CD4-positive, alpha-beta memory T cell (primary cell): ENCODE measurements at regions of chr11 and their contacts with region 1.

Region 1: DNA sequence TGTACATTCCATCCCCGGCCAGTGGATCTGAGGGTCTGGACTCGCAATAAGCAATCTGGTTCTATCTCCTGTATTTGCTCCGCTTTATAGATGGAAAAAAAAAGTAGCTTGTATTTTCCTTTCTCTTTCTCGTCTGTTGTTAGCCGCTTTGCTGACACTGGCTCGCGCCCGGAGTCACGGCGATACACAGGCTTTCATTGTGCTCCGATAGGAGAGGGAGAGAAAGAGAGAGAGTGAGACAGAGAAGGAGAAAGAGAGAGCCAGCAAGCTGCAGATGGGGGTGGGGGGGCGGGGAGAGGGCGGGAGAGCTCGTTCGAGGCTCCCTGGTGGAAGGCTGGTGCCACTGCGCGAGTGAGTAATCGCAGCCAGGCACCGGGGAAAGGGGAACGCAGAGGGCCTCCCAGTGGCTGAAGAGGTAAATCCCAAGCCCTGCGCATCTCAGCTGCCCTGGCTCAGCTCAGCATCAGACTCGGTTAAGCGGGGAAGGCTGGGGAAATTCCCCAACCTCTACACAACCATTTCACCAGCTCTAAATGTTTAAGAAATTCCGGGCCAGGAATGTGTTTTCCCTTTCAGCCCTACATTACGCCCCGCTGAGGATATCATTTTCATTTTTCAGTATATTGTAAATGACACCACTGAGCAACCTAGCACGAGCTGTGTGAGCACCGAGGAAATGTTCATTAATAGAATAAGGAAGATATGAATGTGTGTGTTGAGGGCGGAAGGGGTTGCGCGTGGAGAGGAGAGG is at the start of gene MAML2:
- DNase-seq: peak; percentile 84 to 96 (median 89)
- H3K4me3 ChIP-seq: peak within 1 kb of the TSS; percentile 60 to 78
- H3K4me3 Mint-ChIP-seq: peak within 1 kb of the TSS; percentile 91 to 98 (median 94)
- H3K27ac ChIP-seq: peak within 1 kb of the TSS; percentile 75
- H3K27ac Mint-ChIP-seq: peak within 1 kb of the TSS; percentile 86 to 97 (median 96)
- H3K4me1 ChIP-seq: peaks cover 34% of the 10 kb centered on the region
- H3K4me1 Mint-ChIP-seq: peaks cover 23 to 46% (median 30%) of the 10 kb centered on the region in 4 donors
- H3K27me3 ChIP-seq: no peaks in the 10 kb centered on the region
- H3K27me3 Mint-ChIP-seq: no peaks in the 10 kb centered on the region
- total RNA-seq, gene MAML2: 37.5 to 38.3 TPM

Region 2: DNA sequence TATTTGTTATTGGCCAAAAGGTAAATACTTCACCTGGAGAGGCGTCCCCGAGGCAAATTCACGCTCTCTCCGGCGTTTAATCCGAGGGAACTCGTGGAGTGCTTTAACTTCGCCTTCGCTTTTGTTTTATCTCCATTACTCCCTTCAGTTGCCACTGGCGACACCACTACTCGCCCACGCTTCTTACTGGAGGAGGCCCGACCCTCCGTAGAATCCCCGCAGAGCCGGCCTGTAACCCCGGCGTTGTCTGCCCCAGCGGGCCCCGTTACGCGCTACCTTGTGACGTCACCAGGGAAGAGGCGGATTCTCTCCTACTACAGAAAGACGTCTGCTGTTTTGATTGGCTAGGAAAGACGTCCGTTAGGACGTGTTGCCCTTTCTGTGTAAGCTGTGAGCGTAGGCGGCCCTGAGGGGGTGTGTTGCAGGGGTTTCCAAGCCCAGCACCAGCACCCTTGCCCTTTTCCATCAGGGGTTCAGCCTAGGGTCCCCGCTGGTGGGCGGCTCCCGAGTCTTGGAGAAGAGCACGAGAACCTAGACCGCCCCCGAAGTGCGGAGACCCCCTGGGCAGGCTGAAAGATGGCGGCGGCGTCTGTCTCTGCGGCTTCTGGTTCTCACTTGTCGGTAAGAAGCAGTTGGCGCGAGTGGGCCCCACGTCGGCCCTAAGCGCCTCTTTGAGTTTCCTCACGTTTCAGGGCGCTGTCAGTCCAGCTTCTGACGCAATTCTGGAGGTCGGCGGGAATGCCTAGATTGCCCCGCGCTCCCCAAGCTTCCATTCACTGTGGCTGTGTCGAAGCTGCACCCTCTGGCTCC is 552.8 kb before region 1 on chr11 and contains the start of gene CEP57:
- CTCF ChIA-PET with region 1: interaction called, 12 read pairs
- POLR2A ChIA-PET with region 1: interaction called, 20 read pairs
- intact Hi-C with region 1: loop called (anchors 2 kb)
- DNase-seq: peak; percentile 95 to 99 (median 96)
- H3K4me3 ChIP-seq: peak within 1 kb of the TSS; percentile 68 to 98
- H3K4me3 Mint-ChIP-seq: peak within 1 kb of the TSS; percentile 97 to 100 (median 99)
- H3K27ac ChIP-seq: peak within 1 kb of the TSS; percentile 99
- H3K27ac Mint-ChIP-seq: peak within 1 kb of the TSS; percentile 100
- H3K4me1 ChIP-seq: peaks cover 47% of the 10 kb centered on the region
- H3K4me1 Mint-ChIP-seq: peaks cover 43 to 70% (median 56%) of the 10 kb centered on the region in 4 donors
- H3K27me3 ChIP-seq: no peaks in the 10 kb centered on the region
- H3K27me3 Mint-ChIP-seq: no peaks in the 10 kb centered on the region
- total RNA-seq, gene CEP57: 76.0 to 78.9 TPM

Region 3: GRCh38 chr11:96054870-96055705 is 288.0 kb before region 1 on chr11:
- CTCF ChIA-PET with region 1: interaction called, 258 read pairs
- POLR2A ChIA-PET with region 1: interaction called, 66 read pairs
- intact Hi-C with region 1: loop called (anchors 1 kb)
- DNase-seq: peak in 4 of 5 donors; percentile 31 to 41 (median 36)
- H3K4me3 ChIP-seq: no peak overlapping the region
- H3K4me3 Mint-ChIP-seq: no peak overlapping the region
- H3K27ac ChIP-seq: no peak overlapping the region
- H3K27ac Mint-ChIP-seq: peak overlapping the region in 5 of 7 donors; percentile 19 to 81 (median 65)
- H3K4me1 ChIP-seq: no peaks in the 10 kb centered on the region
- H3K4me1 Mint-ChIP-seq: peaks cover 23 to 40% (median 39%) of the 10 kb centered on the region in 4 donors
- H3K27me3 ChIP-seq: no peaks in the 10 kb centered on the region
- H3K27me3 Mint-ChIP-seq: no peaks in the 10 kb centered on the region

Region 4: GRCh38 chr11:96102664-96103078 is 240.5 kb before region 1 on chr11:
- CTCF ChIA-PET with region 1: interaction called, 35 read pairs
- POLR2A ChIA-PET with region 1: interaction called, 3 read pairs
- intact Hi-C with region 1: no loop called
- DNase-seq: no peak
- H3K4me3 ChIP-seq: no peak overlapping the region
- H3K4me3 Mint-ChIP-seq: no peak overlapping the region
- H3K27ac ChIP-seq: no peak overlapping the region
- H3K27ac Mint-ChIP-seq: peak overlapping the region in 4 of 7 donors; percentile 6 to 65 (median 36)
- H3K4me1 ChIP-seq: peaks cover 37% of the 10 kb centered on the region
- H3K4me1 Mint-ChIP-seq: peaks cover 37 to 72% (median 50%) of the 10 kb centered on the region in 4 donors
- H3K27me3 ChIP-seq: no peaks in the 10 kb centered on the region
- H3K27me3 Mint-ChIP-seq: no peaks in the 10 kb centered on the region

Region 5: DNA sequence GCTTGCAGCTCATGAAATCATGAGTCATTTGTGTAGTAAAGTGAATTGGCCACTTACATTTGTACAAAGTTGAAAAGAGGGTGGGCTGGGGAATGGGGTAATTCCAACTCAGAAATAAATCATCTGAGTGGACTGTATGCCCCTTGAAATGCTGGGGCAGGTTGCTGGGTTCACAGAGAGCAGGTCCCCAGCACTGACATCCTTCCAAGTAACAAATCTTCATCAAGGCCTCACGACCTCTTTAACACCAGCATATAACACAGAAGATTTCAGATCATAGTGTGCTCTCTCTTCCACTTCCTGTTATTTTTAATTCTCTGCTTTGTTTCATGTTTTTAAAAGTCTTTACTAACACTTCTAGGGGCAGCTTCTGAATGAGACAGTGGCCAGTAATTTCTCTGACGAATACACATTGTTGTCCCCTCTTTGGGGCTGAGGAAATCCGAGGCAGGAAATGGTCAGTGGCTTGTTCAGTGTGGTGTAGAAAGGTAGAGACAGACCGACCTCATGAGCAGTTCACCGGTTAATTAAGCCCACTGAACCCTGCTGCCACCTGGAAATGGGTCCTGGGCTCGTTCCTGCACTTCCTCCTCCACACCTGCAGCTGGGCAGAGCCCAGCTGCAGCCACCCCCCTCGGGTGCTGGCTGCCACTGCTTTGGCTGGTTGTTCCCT is 127.9 kb before region 1 on chr11:
- CTCF ChIA-PET with region 1: interaction called, 41 read pairs
- POLR2A ChIA-PET with region 1: interaction called, 53 read pairs
- intact Hi-C with region 1: no loop called
- DNase-seq: peak; percentile 41 to 47 (median 45)
- H3K4me3 ChIP-seq: peak overlapping the region in 1 of 2 donors; percentile 14
- H3K4me3 Mint-ChIP-seq: peak overlapping the region; percentile 37 to 82 (median 71)
- H3K27ac ChIP-seq: peak overlapping the region; percentile 62
- H3K27ac Mint-ChIP-seq: peak overlapping the region; percentile 89 to 96 (median 94)
- H3K4me1 ChIP-seq: peaks cover 99% of the 10 kb centered on the region
- H3K4me1 Mint-ChIP-seq: peaks cover 62 to 89% (median 77%) of the 10 kb centered on the region in 4 donors
- H3K27me3 ChIP-seq: no peaks in the 10 kb centered on the region
- H3K27me3 Mint-ChIP-seq: no peaks in the 10 kb centered on the region

Region 6: GRCh38 chr11:96267496-96268032 is 75.6 kb before region 1 on chr11:
- CTCF ChIA-PET with region 1: interaction called, 43 read pairs
- POLR2A ChIA-PET with region 1: interaction called, 12 read pairs
- intact Hi-C with region 1: no loop called
- DNase-seq: peak; percentile 35 to 71 (median 46)
- H3K4me3 ChIP-seq: peak overlapping the region; percentile 14 to 28
- H3K4me3 Mint-ChIP-seq: peak overlapping the region; percentile 70 to 90 (median 82)
- H3K27ac ChIP-seq: peak overlapping the region; percentile 68
- H3K27ac Mint-ChIP-seq: peak overlapping the region; percentile 88 to 96 (median 93)
- H3K4me1 ChIP-seq: peaks cover 57% of the 10 kb centered on the region
- H3K4me1 Mint-ChIP-seq: peaks cover 61 to 92% (median 77%) of the 10 kb centered on the region in 4 donors
- H3K27me3 ChIP-seq: no peaks in the 10 kb centered on the region
- H3K27me3 Mint-ChIP-seq: no peaks in the 10 kb centered on the region

Region 7: DNA sequence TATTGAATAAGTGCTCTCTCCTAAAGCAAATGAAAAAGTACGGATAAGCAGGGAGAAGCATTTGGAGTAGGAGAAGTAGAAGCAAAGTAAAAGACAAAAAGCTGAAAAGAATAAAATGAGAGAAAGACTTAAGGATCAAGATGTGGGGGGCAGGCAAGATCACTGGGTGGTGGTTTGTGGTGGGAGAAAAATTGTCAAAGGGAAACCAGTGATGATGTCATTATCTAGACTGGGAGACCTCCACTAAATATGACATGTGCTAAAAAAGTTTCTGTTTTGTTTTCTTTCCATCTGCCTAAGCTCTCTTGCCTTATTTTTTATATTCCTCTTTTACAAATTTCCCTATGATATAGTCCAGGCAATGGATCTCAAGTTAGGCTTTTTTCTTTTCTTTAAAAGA is 14.7 kb after region 1 on chr11:
- CTCF ChIA-PET with region 1: interaction called, 21 read pairs
- POLR2A ChIA-PET with region 1: interaction called, 3 read pairs
- intact Hi-C with region 1: no loop called
- DNase-seq: no peak
- H3K4me3 ChIP-seq: no peak overlapping the region
- H3K4me3 Mint-ChIP-seq: peak overlapping the region in 1 of 8 donors; percentile 27
- H3K27ac ChIP-seq: no peak overlapping the region
- H3K27ac Mint-ChIP-seq: peak overlapping the region in 1 of 7 donors; percentile 63
- H3K4me1 ChIP-seq: no peaks in the 10 kb centered on the region
- H3K4me1 Mint-ChIP-seq: peaks cover 0 to 8% (median 3%) of the 10 kb centered on the region in 4 donors
- H3K27me3 ChIP-seq: no peaks in the 10 kb centered on the region
- H3K27me3 Mint-ChIP-seq: no peaks in the 10 kb centered on the region

Region 8: DNA sequence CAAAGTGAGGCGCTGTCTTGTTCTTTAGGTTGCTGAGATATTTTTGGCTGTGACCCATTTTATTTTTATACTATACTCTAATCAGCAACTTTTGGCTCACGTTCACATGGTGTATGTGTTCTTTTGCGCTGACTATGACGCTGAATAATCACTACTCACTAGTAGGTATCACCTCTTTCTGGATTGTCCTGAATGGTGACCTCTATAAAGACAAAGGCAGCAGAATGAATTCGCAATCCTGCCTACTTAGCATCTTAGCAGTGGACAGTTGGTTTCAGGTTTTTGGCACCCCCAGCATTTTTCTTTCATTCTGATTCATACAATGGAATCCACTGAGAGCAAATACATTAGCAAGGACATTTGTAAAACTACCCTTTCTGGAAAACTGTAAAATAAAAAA is 397.9 kb after region 1 on chr11:
- CTCF ChIA-PET with region 1: no interaction called
- POLR2A ChIA-PET with region 1: no interaction called
- intact Hi-C with region 1: no loop called
- DNase-seq: no peak
- H3K4me3 ChIP-seq: no peak overlapping the region
- H3K4me3 Mint-ChIP-seq: no peak overlapping the region
- H3K27ac ChIP-seq: no peak overlapping the region
- H3K27ac Mint-ChIP-seq: no peak overlapping the region
- H3K4me1 ChIP-seq: no peaks in the 10 kb centered on the region
- H3K4me1 Mint-ChIP-seq: no peaks in the 10 kb centered on the region
- H3K27me3 ChIP-seq: no peaks in the 10 kb centered on the region
- H3K27me3 Mint-ChIP-seq: peaks cover 0 to 2% of the 10 kb centered on the region in 2 donors